ENCODE measurements at regions of chr21 and their contacts with region 1.

Region 1: GRCh38 chr21:45973659-45974072 is 7.9 kb upstream of the COL6A1 start:
- DNase-seq: no peak
- H3K4me3 ChIP-seq: peak overlapping the region; percentile 47 to 61
- H3K27ac ChIP-seq: peak overlapping the region; percentile 93
- H3K4me1 ChIP-seq: peaks cover 58% of the 10 kb centered on the region
- H3K27me3 ChIP-seq: no peaks in the 10 kb centered on the region
- CTCF ChIP-seq: peak in 2 of 3 experiments; percentile 47 to 71
- POLR2A ChIP-seq: peak in 1 of 2 donors; percentile 60

Region 2: GRCh38 chr21:45709173-45709572 is 264.5 kb before region 1 on chr21:
- intact Hi-C with region 1: no loop called
- DNase-seq: no peak
- H3K4me3 ChIP-seq: no peak overlapping the region
- H3K27ac ChIP-seq: no peak overlapping the region
- H3K4me1 ChIP-seq: no peaks in the 10 kb centered on the region
- H3K27me3 ChIP-seq: no peaks in the 10 kb centered on the region
- CTCF ChIP-seq: no peak
- POLR2A ChIP-seq: no peak

Region 3: DNA sequence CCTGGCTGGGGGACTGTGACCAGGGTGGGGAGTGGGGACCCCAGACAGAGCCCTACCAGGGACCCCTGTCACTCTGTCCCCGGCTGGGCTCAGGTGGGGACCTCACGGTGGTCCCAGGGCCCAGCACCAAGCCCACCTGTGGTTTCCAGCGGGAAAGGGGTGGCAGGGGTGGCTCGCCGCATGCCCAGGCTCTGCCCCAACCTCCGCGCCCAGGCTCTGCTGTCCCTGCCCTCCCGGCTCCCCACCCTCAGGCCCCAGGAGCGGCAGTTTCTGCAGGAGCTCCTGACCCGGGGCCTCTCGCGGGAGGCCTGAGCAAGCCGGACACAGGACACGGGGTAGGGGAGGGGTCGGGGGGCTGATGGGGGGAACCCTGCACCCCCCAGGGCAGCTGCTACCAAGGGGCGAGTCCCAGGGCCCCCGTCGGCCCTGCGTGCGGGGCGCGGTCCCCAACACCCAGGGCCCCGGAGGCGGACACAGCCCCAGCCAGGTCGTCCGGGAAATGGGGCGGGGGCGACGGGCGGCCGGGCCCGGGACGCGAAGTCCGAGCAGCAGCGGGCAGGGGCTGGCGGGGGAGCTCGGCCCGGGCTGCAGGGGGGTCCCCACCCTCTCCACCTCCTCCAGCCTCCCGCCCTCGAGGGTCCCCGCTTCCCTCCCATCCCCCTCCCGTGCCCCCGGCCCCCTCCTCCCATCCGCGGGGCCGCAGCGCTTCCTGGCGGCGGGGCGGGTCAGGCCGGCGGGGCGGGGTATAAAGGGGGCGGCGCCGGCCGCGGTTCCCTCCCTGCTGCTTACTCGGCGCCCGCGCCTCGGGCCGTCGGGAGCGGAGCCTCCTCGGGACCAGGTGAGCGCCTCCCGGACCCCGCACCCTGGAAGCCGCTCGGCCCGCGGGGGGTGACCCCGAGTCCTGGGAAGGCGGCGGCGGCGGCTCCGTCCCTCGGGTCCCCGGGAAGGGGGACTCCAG is 123.9 kb after region 1 on chr21 and contains the start of gene COL6A2:
- intact Hi-C with region 1: loop called (anchors 1 kb)
- DNase-seq: peak; percentile 86 to 87
- H3K4me3 ChIP-seq: peak within 1 kb of the TSS; percentile 72 to 80
- H3K27ac ChIP-seq: peak within 1 kb of the TSS; percentile 98
- H3K4me1 ChIP-seq: peaks cover 46% of the 10 kb centered on the region
- H3K27me3 ChIP-seq: no peaks in the 10 kb centered on the region
- CTCF ChIP-seq: peak in 1 of 3 experiments; percentile 46
- POLR2A ChIP-seq: peak in 1 of 2 donors; percentile 90
- total RNA-seq, gene COL6A2: 535 TPM

Region 4: DNA sequence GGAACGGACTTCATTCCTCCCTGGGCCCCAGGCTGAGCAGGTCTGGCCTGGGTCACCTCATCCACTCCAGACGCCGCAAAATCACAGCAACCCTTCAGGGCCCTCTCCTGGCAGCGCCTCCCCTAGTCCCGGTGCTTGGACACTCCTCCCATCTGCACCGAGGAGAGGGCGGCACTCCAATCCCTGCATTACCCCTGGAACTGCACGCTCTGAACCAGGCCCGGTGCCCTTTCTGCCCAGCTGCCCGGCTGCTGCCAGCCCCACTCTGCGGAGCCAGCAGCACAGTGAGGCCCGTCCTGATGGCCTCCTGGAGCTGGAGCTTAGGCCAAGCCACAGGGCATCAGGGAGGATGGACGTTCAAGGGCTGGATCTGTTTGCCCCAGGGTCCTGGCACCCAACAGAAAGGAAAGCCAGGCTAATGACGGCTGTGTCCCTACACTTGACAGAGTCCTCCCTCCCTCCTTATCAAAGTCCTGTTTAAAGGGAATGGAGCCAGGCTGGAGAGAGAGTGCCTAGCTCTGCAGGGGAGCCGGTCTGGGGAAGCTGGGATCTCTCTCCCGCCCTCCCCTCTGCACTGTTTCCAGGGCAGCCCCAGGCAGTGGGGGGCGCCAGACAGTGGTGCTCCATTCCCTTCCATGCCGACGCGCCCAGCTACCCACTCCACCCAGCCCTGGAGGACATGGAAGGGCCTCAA is 137.0 kb after region 1 on chr21:
- intact Hi-C with region 1: loop called (anchors 5 kb)
- DNase-seq: peak; percentile 78 to 82
- H3K4me3 ChIP-seq: peak overlapping the region in 1 of 2 donors; percentile 17
- H3K27ac ChIP-seq: peak overlapping the region; percentile 60
- H3K4me1 ChIP-seq: peaks cover 29% of the 10 kb centered on the region
- H3K27me3 ChIP-seq: no peaks in the 10 kb centered on the region
- CTCF ChIP-seq: no peak
- POLR2A ChIP-seq: no peak

Region 5: DNA sequence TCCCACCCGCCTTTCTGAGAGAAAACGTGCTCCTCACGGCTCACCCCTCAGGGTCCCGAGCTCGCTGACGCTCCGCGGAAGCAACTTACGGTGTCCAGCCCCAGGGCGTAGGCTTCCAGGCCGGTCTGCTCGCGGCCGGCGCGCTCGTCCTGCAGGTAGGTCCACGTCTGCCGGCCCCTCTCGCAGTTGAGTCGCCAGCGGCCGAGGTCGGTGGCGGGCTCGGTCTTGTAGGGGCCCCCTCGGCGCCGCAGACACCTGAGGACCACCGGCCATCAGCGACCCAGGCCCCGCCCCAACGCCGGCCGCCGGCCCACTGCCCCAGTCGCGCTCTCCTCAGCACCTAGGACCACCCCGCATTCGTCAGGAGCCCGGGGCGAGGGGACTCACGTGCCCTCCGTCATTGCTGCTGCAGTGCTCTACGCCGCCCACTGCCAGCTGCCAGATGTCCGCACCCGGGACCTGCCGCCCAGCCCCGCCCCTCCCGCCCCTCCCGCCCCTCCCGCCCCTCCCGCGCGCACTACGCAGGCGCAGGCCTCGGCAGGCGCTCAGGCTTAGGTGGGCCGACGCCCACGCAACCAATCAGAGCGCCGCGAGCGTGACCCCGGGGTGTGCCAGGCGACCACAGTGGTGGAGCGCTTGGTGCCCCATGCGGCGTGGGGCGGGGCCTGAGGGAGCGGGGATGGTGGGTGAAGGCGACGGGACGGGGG is 254.8 kb after region 1 on chr21 and contains the start of gene LSS:
- intact Hi-C with region 1: loop called (anchors 5 kb)
- DNase-seq: peak; percentile 93 to 97
- H3K4me3 ChIP-seq: peak within 1 kb of the TSS; percentile 60 to 97
- H3K27ac ChIP-seq: peak within 1 kb of the TSS; percentile 96
- H3K4me1 ChIP-seq: peaks cover 33% of the 10 kb centered on the region
- H3K27me3 ChIP-seq: no peaks in the 10 kb centered on the region
- CTCF ChIP-seq: no peak
- POLR2A ChIP-seq: peak in 1 of 2 donors; percentile 57
- total RNA-seq, gene LSS: 103 TPM

Region 6: GRCh38 chr21:46323227-46324128 is 349.8 kb after region 1 on chr21 and contains the start of gene C21orf58:
- intact Hi-C with region 1: loop called (anchors 10 kb)
- DNase-seq: peak in 1 of 2 donors; percentile 98
- H3K4me3 ChIP-seq: peak within 1 kb of the TSS; percentile 89 to 98
- H3K27ac ChIP-seq: peak within 1 kb of the TSS; percentile 99
- H3K4me1 ChIP-seq: peaks cover 34% of the 10 kb centered on the region
- H3K27me3 ChIP-seq: no peaks in the 10 kb centered on the region
- CTCF ChIP-seq: no peak
- POLR2A ChIP-seq: no peak
- total RNA-seq, gene C21orf58: 2.9 TPM

Measured in vagina (tissue), 2 donors.